SK-N-SH (cell line): ENCODE measurements at regions of chr3 and their contacts with region 1.

Region 1: GRCh38 chr3:27467545-27467944 is 16.6 kb downstream of the SLC4A7 start:
- DNase-seq: peak; percentile 39
- H3K4me3 ChIP-seq: no peak overlapping the region
- H3K27ac ChIP-seq: peak overlapping the region in 1 of 2 experiments; percentile 9; a peak in 1 of 4 replicates
- H3K4me1 ChIP-seq: peaks cover 0 to 4% of the 10 kb centered on the region in 2 experiments; a peak in 2 of 4 replicates
- H3K27me3 ChIP-seq: no peaks in the 10 kb centered on the region
- CTCF ChIP-seq: peak; percentile 77
- EP300 ChIP-seq: no peak
- RAD21 ChIP-seq: peak; percentile 68

Region 2: GRCh38 chr3:27165321-27165721 is 302.2 kb before region 1 on chr3:
- CTCF ChIA-PET with region 1: no interaction called
- POLR2A ChIA-PET with region 1: no interaction called
- DNase-seq: no peak
- H3K4me3 ChIP-seq: no peak overlapping the region
- H3K27ac ChIP-seq: peak overlapping the region; percentile 36 to 68
- H3K4me1 ChIP-seq: peaks cover 0 to 5% of the 10 kb centered on the region in 2 experiments; a peak in 2 of 4 replicates
- H3K27me3 ChIP-seq: no peaks in the 10 kb centered on the region
- CTCF ChIP-seq: no peak
- EP300 ChIP-seq: no peak
- RAD21 ChIP-seq: no peak

Region 3: DNA sequence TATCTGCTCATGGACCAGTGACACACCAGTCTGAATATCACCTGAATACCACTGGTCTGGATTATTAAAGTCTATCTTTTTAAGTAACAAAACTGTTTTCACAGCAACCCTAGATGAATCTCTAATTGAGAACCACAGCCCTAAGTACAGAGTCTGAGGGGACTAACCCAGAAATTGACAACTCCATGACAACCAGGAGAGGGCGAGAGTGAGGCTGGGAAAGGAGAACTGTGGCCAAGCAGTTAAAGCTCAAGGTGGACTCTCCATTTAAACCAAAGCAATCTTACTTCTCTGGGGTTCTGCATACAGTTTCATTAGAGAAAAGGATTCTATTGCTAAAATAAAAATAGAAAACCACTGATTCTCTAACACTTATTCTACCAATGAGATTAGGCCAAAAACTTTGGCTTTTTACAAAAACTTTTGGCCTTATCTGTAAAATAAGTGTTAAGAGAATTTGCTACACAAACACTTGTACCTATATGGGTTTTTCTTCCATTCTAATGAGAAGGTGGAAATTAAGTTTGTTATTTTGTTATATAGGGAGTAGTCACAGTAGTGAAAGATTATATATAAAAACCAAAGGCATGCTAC is 109.8 kb before region 1 on chr3:
- CTCF ChIA-PET with region 1: interaction called, 13 read pairs
- POLR2A ChIA-PET with region 1: no interaction called
- DNase-seq: peak; percentile 39
- H3K4me3 ChIP-seq: no peak overlapping the region; a peak in 1 of 4 replicates
- H3K27ac ChIP-seq: no peak overlapping the region
- H3K4me1 ChIP-seq: no peaks in the 10 kb centered on the region; a peak in 1 of 4 replicates
- H3K27me3 ChIP-seq: no peaks in the 10 kb centered on the region
- CTCF ChIP-seq: peak; percentile 70
- EP300 ChIP-seq: no peak
- RAD21 ChIP-seq: peak; percentile 74

Region 4: DNA sequence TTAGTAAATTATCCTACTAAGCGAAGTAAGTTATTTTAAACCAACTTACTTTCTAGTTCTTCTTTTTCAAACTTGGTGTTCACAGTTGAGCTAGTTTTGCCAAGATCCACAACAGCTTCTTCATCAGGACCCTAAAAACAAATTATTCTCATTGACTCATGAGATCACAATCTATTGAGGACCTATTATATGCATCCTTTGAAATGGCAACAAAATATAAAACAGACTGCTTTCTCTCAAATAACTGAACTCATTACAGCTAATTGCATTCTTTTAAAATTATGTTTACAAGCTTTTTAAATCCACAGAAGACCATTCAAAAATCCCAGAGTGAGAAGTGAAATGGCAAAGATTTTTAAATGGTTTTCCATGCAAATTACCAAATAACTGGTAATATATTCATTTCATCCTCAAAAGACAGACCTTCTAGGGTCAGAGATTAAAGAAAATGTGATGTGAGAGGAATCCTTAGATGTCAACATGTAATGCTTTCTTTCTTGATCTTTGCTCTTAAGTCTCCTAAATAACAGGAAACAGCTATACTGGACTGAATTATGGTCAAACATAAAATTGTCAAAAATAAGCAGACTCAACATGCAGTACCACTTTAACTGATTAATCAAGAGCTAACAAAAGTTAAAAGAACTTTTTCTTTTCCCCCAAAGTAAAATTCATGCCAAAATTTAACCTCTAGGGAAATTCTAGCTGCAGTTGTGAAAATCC is 15.0 kb before region 1 on chr3:
- CTCF ChIA-PET with region 1: interaction called, 15 read pairs
- POLR2A ChIA-PET with region 1: no interaction called
- DNase-seq: no peak
- H3K4me3 ChIP-seq: no peak overlapping the region
- H3K27ac ChIP-seq: 0 out of 4 replicates have a peak overlapping the region, but pooled peaks of 1 of the 2 experiments have one; percentile 4
- H3K4me1 ChIP-seq: peaks cover 0 to 8% of the 10 kb centered on the region in 2 experiments; a peak in 2 of 4 replicates
- H3K27me3 ChIP-seq: no peaks in the 10 kb centered on the region
- CTCF ChIP-seq: no peak
- EP300 ChIP-seq: no peak
- RAD21 ChIP-seq: no peak

Region 5: DNA sequence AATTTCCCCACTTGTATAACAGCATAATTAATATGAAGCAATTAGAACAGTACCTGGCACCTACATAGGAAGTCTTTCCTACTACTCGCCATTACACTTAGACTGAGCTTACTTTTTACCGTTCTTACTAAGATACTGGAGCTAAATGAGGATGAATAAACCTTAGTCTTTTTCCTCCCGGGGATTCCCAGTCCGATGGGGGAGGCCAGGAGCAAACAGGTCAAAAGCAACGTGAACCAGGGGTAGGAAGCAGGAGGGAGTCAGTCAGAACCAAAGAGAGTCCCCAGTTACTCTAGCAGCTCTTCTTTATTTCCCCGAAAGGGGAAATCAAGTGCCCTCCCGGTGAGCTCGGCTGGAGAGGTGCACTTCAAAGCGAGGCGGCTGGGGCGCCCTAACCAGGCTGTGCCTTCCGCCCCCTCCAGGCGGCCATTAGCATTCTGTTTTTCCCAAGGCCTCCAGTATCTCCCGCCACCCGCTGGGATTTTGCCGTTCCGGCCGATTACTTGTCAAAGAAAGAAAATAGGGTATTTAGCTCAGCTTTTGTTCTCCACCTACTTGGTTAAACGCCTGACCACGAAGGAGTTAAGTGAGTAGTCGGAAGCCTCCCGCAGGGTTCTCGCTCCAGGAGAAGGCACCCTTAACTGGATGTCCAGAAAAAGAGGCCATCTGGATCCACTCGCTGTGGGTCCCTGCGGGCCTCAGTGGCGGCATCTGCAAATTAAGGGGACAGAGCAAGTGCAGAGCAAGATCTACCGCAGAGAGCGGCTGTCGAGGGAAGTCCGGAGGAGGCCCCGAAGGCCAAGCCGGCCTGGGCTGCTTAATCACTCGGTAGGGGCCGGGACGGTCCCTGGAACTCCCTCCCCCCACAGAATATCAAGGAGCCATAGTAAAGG is 260.9 kb after region 1 on chr3:
- CTCF ChIA-PET with region 1: no interaction called
- POLR2A ChIA-PET with region 1: no interaction called
- DNase-seq: peak; percentile 48
- H3K4me3 ChIP-seq: no peak overlapping the region; a peak in 1 of 4 replicates
- H3K27ac ChIP-seq: no peak overlapping the region
- H3K4me1 ChIP-seq: peaks cover 3 to 9% of the 10 kb centered on the region in 2 experiments; a peak in 1 of 4 replicates
- H3K27me3 ChIP-seq: peaks cover 80% of the 10 kb centered on the region
- CTCF ChIP-seq: peak; percentile 24; the same call in 1 of the 2 replicates
- EP300 ChIP-seq: no peak
- RAD21 ChIP-seq: no peak